Sigmoid colon (tissue), 7 donors: ENCODE measurements at regions of chr2 and their contacts with region 1.

Region 1: GRCh38 chr2:67846370-67847070 is 216.3 kb downstream of the C1D start:
- DNase-seq: peak; percentile 98
- H3K4me3 ChIP-seq: peak overlapping the region in 2 of 4 donors; percentile 4 to 21
- H3K27ac ChIP-seq: peak overlapping the region; percentile 31 to 74 (median 64)
- H3K4me1 ChIP-seq: peaks cover 0 to 21% (median 8%) of the 10 kb centered on the region in 4 donors
- H3K27me3 ChIP-seq: no peaks in the 10 kb centered on the region
- CTCF ChIP-seq: peak; percentile 57 to 83 (median 68)
- EP300 ChIP-seq: peak in 3 of 4 donors; percentile 78 to 88 (median 78)
- POLR2A ChIP-seq: no peak

Region 2: GRCh38 chr2:66790651-66791181 is 1055.8 kb before region 1 on chr2:
- intact Hi-C with region 1: loop called (anchors 5 kb)
- DNase-seq: peak; percentile 76
- H3K4me3 ChIP-seq: no peak overlapping the region
- H3K27ac ChIP-seq: peak overlapping the region; percentile 44 to 77 (median 68)
- H3K4me1 ChIP-seq: peaks cover 0 to 63% (median 49%) of the 10 kb centered on the region in 4 donors
- H3K27me3 ChIP-seq: no peaks in the 10 kb centered on the region
- CTCF ChIP-seq: no peak
- EP300 ChIP-seq: peak in 1 of 4 donors; percentile 19
- POLR2A ChIP-seq: no peak

Region 3: GRCh38 chr2:67259581-67260342 is 586.8 kb before region 1 on chr2:
- intact Hi-C with region 1: loop called (anchors 5 kb)
- DNase-seq: peak; percentile 94
- H3K4me3 ChIP-seq: no peak overlapping the region
- H3K27ac ChIP-seq: peak overlapping the region; percentile 84 to 89 (median 86)
- H3K4me1 ChIP-seq: peaks cover 0 to 28% (median 19%) of the 10 kb centered on the region in 4 donors
- H3K27me3 ChIP-seq: no peaks in the 10 kb centered on the region
- CTCF ChIP-seq: no peak
- EP300 ChIP-seq: peak; percentile 51 to 86 (median 62)
- POLR2A ChIP-seq: no peak

Region 4: DNA sequence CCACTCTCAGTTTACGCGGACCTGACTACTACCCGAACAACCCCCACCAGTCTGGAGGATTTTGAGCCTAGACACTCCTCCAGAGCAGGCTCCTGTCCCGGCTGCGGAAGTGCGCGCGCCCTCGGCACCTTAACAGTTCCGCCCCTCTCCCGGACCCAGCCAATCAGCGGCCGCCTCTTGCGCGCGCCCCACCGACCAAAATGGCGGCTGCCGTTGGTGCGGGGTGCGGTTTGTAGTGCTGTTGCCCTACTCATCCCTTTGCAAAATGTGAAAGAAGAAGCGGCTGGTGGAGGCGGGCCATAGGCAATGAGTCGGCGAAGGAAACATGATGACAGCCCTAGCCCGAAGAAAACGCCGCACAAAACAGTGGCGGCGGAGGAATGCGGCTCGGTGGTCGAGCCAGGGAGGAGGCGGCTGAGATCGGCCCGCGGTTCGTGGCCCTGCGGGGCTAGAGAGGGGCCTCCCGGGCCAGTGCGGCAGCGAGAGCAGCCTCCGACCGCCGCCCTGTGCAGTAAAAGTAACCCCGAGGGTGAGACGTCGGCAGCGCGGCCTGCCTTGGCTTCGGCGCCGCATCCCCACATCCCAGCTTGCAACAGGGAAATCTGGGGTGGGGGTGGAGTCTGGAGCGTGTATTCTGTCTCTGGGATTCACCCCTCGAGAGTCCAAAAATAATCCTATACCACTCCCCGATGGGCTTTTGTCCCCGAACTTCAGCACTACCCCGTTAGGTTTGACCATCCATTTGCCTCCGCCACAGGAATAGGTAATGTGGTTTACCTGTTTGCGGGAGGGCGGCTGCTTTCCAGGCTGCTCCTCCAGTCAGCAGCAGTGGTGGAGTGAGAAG is 449.2 kb before region 1 on chr2 and contains the start of gene ETAA1:
- intact Hi-C with region 1: loop called (anchors 5 kb)
- DNase-seq: peak; percentile 97
- H3K4me3 ChIP-seq: peak within 1 kb of the TSS; percentile 76 to 88 (median 83)
- H3K27ac ChIP-seq: peak within 1 kb of the TSS; percentile 90 to 95 (median 94)
- H3K4me1 ChIP-seq: peaks cover 0 to 31% (median 13%) of the 10 kb centered on the region in 4 donors
- H3K27me3 ChIP-seq: no peaks in the 10 kb centered on the region
- CTCF ChIP-seq: no peak
- EP300 ChIP-seq: no peak
- POLR2A ChIP-seq: peak; percentile 77 to 82
- total RNA-seq, gene ETAA1: 12.1 to 20.0 (median 15.8) TPM

Region 5: GRCh38 chr2:67752969-67753368 is 93.6 kb before region 1 on chr2:
- intact Hi-C with region 1: loop called (anchors 5 kb)
- DNase-seq: no peak
- H3K4me3 ChIP-seq: no peak overlapping the region
- H3K27ac ChIP-seq: peak overlapping the region in 2 of 4 donors; percentile 60 to 69
- H3K4me1 ChIP-seq: peaks cover 0 to 60% (median 53%) of the 10 kb centered on the region in 4 donors
- H3K27me3 ChIP-seq: no peaks in the 10 kb centered on the region
- CTCF ChIP-seq: no peak
- EP300 ChIP-seq: peak; percentile 9 to 86 (median 66)
- POLR2A ChIP-seq: no peak